ENCODE measurements at regions of chr1 and their contacts with region 1.

Region 1: DNA sequence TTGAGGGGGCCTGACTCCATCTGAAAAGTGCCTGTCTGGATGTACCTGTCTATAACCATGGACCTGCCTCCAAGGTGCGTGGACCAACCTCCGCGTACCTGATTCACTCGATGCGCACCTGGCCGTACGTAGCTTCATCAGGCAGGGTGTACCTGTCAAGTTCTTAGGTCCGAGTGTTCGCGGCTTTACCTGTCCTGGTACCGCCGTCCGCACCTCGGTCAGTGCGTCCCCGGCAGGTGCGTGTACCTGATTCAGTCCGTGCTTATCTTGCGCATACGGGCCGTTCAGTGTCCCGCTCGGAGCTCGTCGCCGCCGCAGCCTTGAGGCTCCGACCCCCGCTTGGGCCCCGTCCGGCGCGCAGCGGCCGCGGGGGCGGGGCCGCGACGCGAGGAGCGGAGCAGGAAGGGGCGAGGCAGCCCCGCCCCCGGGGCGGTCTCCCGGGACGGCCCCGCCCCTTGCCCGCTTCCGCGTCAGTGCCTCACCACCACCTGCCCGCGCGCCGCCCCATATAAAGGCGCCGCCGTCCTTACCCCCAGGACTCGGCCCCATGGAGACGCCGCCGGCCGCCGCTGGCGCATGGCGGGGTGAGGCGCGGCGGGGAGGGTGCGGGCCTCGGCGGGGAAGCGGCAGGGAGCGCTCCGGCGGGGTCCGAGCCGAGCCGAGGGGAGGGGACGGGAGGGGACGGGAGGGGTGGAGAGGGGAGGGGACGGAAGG is at the start of gene ZC3H12A:
- DNase-seq: peak; percentile 93
- H3K4me3 Mint-ChIP-seq: peak within 1 kb of the TSS; percentile 89
- H3K27ac Mint-ChIP-seq: peak within 1 kb of the TSS; percentile 94
- H3K4me1 Mint-ChIP-seq: peaks cover 49% of the 10 kb centered on the region
- H3K27me3 Mint-ChIP-seq: no peaks in the 10 kb centered on the region
- CTCF ChIP-seq: no peak
- total RNA-seq, gene ZC3H12A: 37.2 and 51.4 TPM in 2 replicates

Region 2: DNA sequence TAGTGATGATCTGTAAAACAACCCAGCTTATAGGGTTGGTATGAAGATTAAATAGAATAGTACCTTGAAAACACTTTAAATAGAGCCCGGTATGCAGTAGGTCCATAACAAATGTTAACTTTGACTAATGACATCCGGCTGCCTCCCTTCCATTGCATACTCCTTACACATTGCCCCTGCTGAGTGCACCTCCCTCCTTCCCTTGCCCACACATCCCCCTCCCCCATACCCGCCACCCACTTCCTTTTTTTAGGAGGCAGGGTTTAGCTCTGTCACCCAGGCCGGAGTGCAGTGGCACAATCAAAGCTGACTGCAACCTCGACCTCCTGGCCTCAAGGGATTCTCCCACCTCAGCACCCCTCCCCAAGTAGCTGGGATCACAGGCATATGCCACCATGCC is 24.3 kb before region 1 on chr1:
- CTCF ChIA-PET with region 1: interaction called, 75 read pairs
- POLR2A ChIA-PET with region 1: interaction called, 79 read pairs
- intact Hi-C with region 1: loop called (anchors 2 kb)
- DNase-seq: no peak
- H3K4me3 Mint-ChIP-seq: no peak overlapping the region
- H3K27ac Mint-ChIP-seq: peak overlapping the region; percentile 54
- H3K4me1 Mint-ChIP-seq: peaks cover 12% of the 10 kb centered on the region
- H3K27me3 Mint-ChIP-seq: no peaks in the 10 kb centered on the region
- CTCF ChIP-seq: no peak

Region 3: DNA sequence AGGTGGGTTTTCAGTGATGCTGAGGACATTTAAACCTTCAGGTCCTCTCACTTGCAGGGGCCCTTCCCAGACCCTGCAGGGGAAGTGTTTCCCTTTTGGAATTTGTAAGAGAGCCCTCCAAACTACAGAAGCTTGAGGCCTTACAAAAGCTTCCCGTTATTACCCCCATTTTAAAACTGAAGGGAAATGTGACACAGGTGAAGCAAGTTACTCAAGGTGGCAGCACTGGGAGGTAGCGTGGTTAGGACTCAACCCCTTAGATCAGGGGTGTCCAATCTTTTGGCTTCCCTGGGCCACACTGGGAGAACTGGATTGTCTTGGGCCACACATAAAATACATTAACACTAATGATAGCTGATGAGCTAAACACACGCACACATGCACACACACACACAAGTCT is 15.7 kb before region 1 on chr1:
- CTCF ChIA-PET with region 1: interaction called, 75 read pairs
- POLR2A ChIA-PET with region 1: interaction called, 143 read pairs
- intact Hi-C with region 1: loop called (anchors 2 kb)
- DNase-seq: no peak
- H3K4me3 Mint-ChIP-seq: no peak overlapping the region
- H3K27ac Mint-ChIP-seq: no peak overlapping the region
- H3K4me1 Mint-ChIP-seq: peaks cover 9% of the 10 kb centered on the region
- H3K27me3 Mint-ChIP-seq: no peaks in the 10 kb centered on the region
- CTCF ChIP-seq: no peak

Region 4: DNA sequence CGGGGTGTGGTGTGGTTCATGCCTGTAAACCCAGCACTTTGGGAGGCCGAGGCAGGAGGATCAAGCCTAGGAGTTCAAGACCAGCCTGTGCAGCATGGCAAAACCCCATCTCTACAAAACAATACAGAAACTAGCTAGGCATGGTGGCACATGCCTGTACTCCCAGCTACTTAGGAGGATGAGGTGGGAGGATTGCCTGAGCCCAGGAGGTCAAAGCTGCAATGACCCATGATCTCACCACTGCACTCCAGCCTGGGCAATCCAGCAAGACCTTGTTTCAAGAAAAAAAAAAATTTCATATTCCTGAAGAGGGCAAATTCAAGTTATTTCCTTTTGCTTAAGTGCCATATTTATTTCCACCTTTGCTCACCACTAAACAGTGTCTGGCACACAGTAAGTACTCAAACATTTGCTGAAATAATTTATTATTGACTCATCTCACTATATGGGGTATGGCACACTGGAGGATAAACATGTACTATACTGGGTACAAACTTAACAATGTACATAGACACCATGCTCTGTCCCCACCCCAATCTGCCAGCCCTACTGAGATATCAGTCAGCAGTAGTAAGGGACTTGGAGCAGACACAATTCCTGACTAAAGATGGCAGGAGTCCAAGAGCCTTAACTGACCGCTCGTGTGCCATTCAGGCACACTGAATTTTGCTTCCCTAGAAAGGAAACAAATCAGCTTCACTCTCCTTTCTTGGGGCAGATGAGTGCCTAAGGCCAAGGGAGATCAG is 24.8 kb after region 1 on chr1:
- CTCF ChIA-PET with region 1: interaction called, 7 read pairs
- POLR2A ChIA-PET with region 1: interaction called, 14 read pairs
- intact Hi-C with region 1: no loop called
- DNase-seq: peak; percentile 70
- H3K4me3 Mint-ChIP-seq: no peak overlapping the region
- H3K27ac Mint-ChIP-seq: peak overlapping the region; percentile 59
- H3K4me1 Mint-ChIP-seq: peaks cover 7% of the 10 kb centered on the region
- H3K27me3 Mint-ChIP-seq: no peaks in the 10 kb centered on the region
- CTCF ChIP-seq: no peak

Region 5: GRCh38 chr1:37514350-37515184 is 40.4 kb after region 1 on chr1 and contains the start of gene MEAF6:
- CTCF ChIA-PET with region 1: interaction called, 9 read pairs
- POLR2A ChIA-PET with region 1: interaction called, 159 read pairs
- intact Hi-C with region 1: no loop called
- DNase-seq: peak; percentile 80
- H3K4me3 Mint-ChIP-seq: peak within 1 kb of the TSS; percentile 82
- H3K27ac Mint-ChIP-seq: peak within 1 kb of the TSS; percentile 82
- H3K4me1 Mint-ChIP-seq: peaks cover 16% of the 10 kb centered on the region
- H3K27me3 Mint-ChIP-seq: no peaks in the 10 kb centered on the region
- CTCF ChIP-seq: peak; percentile 72
- total RNA-seq, gene MEAF6: 71.3 and 72.0 TPM in 2 replicates

Region 6: GRCh38 chr1:37537378-37537777 is 63.2 kb after region 1 on chr1:
- CTCF ChIA-PET with region 1: no interaction called
- POLR2A ChIA-PET with region 1: interaction called, 22 read pairs
- intact Hi-C with region 1: loop called (anchors 10 kb)
- DNase-seq: peak; percentile 91
- H3K4me3 Mint-ChIP-seq: peak overlapping the region; percentile 22
- H3K27ac Mint-ChIP-seq: peak overlapping the region; percentile 89
- H3K4me1 Mint-ChIP-seq: peaks cover 29% of the 10 kb centered on the region
- H3K27me3 Mint-ChIP-seq: no peaks in the 10 kb centered on the region
- CTCF ChIP-seq: no peak

Region 7: DNA sequence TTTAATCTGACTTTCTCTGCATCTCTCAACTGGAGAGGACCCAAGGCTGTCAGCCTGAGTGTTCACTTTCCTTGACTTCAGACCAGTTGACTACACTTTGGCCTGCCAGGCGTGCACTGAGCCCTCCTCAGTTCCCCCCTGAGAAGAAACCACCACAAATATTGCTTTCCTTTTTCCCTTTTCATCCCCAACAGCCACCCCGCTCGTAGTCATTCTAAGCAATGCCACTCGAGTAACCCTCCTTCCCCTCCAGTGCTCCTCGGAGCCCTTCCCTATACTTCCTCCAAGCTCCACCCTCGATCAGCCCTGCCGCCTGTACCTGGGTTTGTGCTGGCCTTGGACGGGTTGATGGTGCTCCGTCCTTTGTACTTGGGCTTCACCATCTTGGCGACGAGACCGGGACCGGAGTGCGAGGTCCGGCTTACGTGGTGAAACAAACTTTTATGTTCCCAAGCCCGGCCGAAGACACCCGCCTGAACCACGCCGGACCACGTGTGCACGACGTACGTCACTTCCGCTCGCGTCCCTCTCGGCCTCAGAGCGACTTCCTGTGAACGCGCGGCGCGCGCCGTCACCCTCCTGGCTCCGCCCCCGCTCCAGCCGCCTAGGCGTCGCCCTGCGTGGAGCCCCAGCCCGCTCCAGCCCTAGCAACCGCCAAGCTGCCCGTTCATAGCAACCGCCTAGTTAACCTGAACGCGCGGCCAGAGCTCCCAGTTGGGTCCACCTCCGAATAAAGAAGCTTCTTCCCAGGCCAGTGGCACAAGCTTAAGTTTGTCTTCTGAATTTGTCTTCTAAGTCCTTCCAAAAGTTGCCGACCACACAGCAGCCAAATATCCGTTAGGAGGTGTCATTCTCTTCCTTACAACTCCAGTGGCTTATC is 121.5 kb after region 1 on chr1 and contains the start of gene GNL2:
- CTCF ChIA-PET with region 1: no interaction called
- POLR2A ChIA-PET with region 1: interaction called, 6 read pairs
- intact Hi-C with region 1: loop called (anchors 10 kb)
- DNase-seq: peak; percentile 94
- H3K4me3 Mint-ChIP-seq: peak within 1 kb of the TSS; percentile 100
- H3K27ac Mint-ChIP-seq: peak within 1 kb of the TSS; percentile 100
- H3K4me1 Mint-ChIP-seq: no peaks in the 10 kb centered on the region
- H3K27me3 Mint-ChIP-seq: no peaks in the 10 kb centered on the region
- CTCF ChIP-seq: no peak
- total RNA-seq, gene GNL2: 103 and 133 TPM in 2 replicates

Measured in MCF 10A (cell line).